Mammary epithelial cell (primary cell): ENCODE measurements at regions of chr10 and their contacts with region 1.

Region 1: GRCh38 chr10:69087590-69088470 is at the start of gene SRGN:
- DNase-seq: peak; percentile 82
- H3K4me3 ChIP-seq: peak within 1 kb of the TSS; percentile 20 to 62 (median 40)
- H3K27ac ChIP-seq: peak within 1 kb of the TSS; percentile 75
- H3K4me1 ChIP-seq: peaks cover 3% of the 10 kb centered on the region
- H3K27me3 ChIP-seq: no peaks in the 10 kb centered on the region
- CTCF ChIP-seq: no peak
- total RNA-seq, gene SRGN: 0.92 to 1.0 TPM

Region 2: GRCh38 chr10:68792115-68792514 is 295.7 kb before region 1 on chr10:
- CTCF ChIA-PET with region 1: no interaction called
- dilution Hi-C with region 1: no loop called
- in situ Hi-C with region 1: no loop called
- intact Hi-C with region 1: loop called (anchors 10 kb)
- DNase-seq: no peak
- H3K4me3 ChIP-seq: no peak overlapping the region
- H3K27ac ChIP-seq: no peak overlapping the region
- H3K4me1 ChIP-seq: peaks cover 11% of the 10 kb centered on the region
- H3K27me3 ChIP-seq: no peaks in the 10 kb centered on the region
- CTCF ChIP-seq: peak; percentile 10 to 15

Region 3: GRCh38 chr10:69018613-69019012 is 69.2 kb before region 1 on chr10:
- CTCF ChIA-PET with region 1: no interaction called
- dilution Hi-C with region 1: no loop called
- in situ Hi-C with region 1: no loop called
- intact Hi-C with region 1: no loop called
- DNase-seq: no peak
- H3K4me3 ChIP-seq: no peak overlapping the region
- H3K27ac ChIP-seq: no peak overlapping the region
- H3K4me1 ChIP-seq: no peaks in the 10 kb centered on the region
- H3K27me3 ChIP-seq: no peaks in the 10 kb centered on the region
- CTCF ChIP-seq: no peak

Region 4: GRCh38 chr10:69045441-69046300 is 42.2 kb before region 1 on chr10:
- CTCF ChIA-PET with region 1: no interaction called
- dilution Hi-C with region 1: no loop called
- in situ Hi-C with region 1: no loop called
- intact Hi-C with region 1: loop called (anchors 5 kb)
- DNase-seq: peak; percentile 97
- H3K4me3 ChIP-seq: no peak overlapping the region
- H3K27ac ChIP-seq: peak overlapping the region; percentile 92
- H3K4me1 ChIP-seq: peaks cover 24% of the 10 kb centered on the region
- H3K27me3 ChIP-seq: no peaks in the 10 kb centered on the region
- CTCF ChIP-seq: no peak